Heart right ventricle (tissue), 16 donors: ENCODE measurements at regions of chr9 and their contacts with region 1.

Region 1: DNA sequence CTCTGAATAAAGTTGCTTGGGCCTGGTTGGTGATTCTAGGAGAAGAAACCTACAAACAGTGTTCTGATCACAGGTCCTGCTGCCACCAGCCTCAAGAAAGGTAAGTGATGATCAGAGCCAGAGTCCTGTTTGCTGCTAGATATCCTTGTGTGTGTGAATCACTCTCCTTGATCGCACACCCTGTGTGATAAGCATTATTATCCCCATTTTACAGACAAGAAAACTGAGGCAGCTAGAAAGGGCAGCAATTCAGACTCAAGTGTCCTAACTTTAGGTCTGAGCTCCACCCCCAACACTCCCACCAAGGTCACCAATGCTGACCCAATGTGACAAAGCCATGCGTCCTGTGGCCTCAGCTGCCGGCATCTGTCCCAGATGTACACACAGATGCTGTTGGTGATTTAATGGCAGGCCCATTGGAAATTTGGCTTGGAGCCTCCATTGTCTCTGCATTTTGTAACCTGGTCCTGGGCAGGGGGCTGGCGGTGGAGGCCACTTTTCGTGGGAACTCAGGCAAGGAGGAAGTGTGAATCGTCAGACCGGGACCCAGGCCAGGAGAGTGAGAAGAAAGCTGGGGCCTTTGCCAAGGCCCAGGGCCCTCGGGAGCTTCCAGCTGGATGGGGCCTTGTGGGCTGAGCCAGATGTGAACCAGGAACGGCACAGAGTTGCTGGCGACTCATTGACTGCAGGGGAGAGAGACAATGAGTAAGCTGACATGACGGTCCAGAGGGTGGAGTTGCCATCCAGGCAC is 29.8 kb upstream of the GGTA1 start:
- DNase-seq: peak; percentile 98 to 99
- ATAC-seq: peak; percentile 87 to 95 (median 92)
- H3K4me3 ChIP-seq: no peak overlapping the region
- H3K27ac ChIP-seq: peak overlapping the region in 9 of 10 donors; percentile 46 to 79 (median 66)
- H3K4me1 ChIP-seq: peaks cover 7 to 30% (median 19%) of the 10 kb centered on the region in 9 donors
- H3K27me3 ChIP-seq: no peaks in the 10 kb centered on the region
- CTCF ChIP-seq: no peak

Region 2: DNA sequence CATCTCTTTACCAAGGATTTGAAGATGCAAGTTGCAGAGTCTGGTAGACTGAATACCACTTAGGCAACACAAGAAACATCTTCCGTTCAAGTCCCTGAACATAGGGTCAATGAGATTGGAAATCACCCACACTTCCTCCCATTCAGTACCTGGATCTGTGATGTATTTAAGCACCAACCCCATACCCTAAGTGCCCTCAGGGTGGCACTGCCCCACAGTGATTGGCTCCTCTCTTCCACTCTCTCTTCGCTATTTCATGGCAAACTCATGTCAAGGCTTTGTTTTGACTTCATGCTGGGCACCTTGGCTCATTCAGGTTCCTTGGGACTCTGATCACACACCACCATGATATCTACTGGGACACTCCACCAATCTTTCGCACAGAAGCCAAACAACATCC is 83.4 kb before region 1 on chr9:
- intact Hi-C with region 1: loop called in 1 of 10 experiments (anchors 5 kb)
- DNase-seq: no peak
- ATAC-seq: peak in 1 of 8 donors; percentile 31
- H3K4me3 ChIP-seq: no peak overlapping the region
- H3K27ac ChIP-seq: no peak overlapping the region
- H3K4me1 ChIP-seq: peaks cover 2 to 44% (median 21%) of the 10 kb centered on the region in 9 donors
- H3K27me3 ChIP-seq: no peaks in the 10 kb centered on the region
- CTCF ChIP-seq: peak in 5 of 9 donors; percentile 21 to 36 (median 32)

Region 3: GRCh38 chr9:121463026-121463807 is 66.2 kb before region 1 on chr9:
- intact Hi-C with region 1: loop called in 4 of 10 experiments (anchors 1 to 10 kb)
- DNase-seq: peak; percentile 72 to 73
- ATAC-seq: peak in 7 of 8 donors; percentile 54 to 85 (median 72)
- H3K4me3 ChIP-seq: no peak overlapping the region
- H3K27ac ChIP-seq: peak overlapping the region in 1 of 10 donors; percentile 41
- H3K4me1 ChIP-seq: peaks cover 0 to 31% (median 10%) of the 10 kb centered on the region in 9 donors
- H3K27me3 ChIP-seq: no peaks in the 10 kb centered on the region
- CTCF ChIP-seq: peak; percentile 74 to 89 (median 83)

Region 4: DNA sequence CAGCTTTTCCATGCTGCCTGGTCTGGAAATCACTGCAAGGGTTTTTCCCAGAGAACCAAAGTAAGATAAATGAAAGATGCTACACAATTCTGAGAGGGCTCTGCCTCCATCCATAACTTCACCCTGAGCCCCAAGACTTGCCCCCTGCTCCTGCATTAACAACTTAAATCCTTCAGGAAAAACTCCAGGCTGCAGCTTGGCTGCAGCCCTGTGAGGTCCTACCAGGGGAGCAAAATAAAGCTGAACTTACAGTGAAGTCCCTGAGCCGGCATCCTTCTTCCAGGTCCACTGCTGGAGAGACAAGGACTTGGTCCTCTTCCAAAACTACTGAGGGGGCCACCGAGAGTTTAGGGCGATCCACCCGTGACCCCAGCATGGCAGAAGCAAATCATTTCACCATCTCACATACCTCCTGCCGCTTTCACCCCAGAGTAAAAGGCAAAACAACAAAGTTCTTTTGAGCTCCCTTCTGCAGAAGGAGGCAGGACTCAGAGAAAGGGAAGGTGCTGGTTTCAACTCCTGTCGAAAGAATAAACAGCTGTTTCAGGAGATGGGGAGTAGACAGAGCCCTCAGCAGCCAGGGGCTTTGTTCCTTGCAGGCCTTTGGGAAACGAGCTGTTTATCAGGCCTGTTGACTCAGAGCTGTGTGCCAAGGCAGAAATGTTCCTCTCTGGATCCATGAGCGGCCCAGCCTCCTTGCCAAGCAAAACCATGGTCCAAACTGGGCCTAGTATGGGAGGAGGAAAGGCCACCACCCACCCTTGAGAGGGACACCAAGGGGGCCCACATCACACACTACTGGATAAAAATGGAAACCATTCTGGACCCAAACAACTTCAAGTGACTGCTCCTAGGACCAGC is 50.4 kb before region 1 on chr9:
- intact Hi-C with region 1: loop called in 1 of 10 experiments (anchors 5 kb)
- DNase-seq: no peak
- ATAC-seq: peak; percentile 21 to 59 (median 42)
- H3K4me3 ChIP-seq: peak overlapping the region in 1 of 10 donors; percentile 7
- H3K27ac ChIP-seq: peak overlapping the region; percentile 46 to 87 (median 66)
- H3K4me1 ChIP-seq: peaks cover 34 to 81% (median 59%) of the 10 kb centered on the region in 9 donors
- H3K27me3 ChIP-seq: no peaks in the 10 kb centered on the region
- CTCF ChIP-seq: no peak

Region 5: DNA sequence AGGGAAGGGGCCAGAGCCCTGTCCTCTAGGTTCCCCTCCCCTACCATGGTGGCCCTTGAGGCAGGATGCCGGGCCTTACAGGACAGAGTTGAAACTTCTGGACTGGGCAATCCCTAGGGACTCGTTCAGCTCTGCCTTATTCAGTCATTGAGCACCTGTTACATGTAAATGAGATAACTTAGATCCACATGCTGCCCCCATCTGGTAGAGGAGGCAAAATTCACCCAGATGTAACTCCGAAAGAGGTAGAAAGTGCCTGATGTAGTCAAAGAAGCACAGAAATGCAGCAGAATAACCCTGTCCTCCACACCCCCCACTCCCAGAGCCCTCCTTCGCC is 31.3 kb before region 1 on chr9:
- intact Hi-C with region 1: loop called in 1 of 10 experiments (anchors 2 kb)
- DNase-seq: peak in 1 of 2 donors; percentile 78
- ATAC-seq: peak; percentile 23 to 75 (median 64)
- H3K4me3 ChIP-seq: peak overlapping the region in 9 of 10 donors; percentile 51 to 82 (median 70)
- H3K27ac ChIP-seq: peak overlapping the region in 8 of 10 donors; percentile 86 to 95 (median 94)
- H3K4me1 ChIP-seq: peaks cover 5 to 67% (median 28%) of the 10 kb centered on the region in 9 donors
- H3K27me3 ChIP-seq: peaks cover 0 to 6% (median 0%) of the 10 kb centered on the region in 7 donors
- CTCF ChIP-seq: peak; percentile 36 to 82 (median 73)